H1 (cell line): ENCODE measurements at regions of chr11 and their contacts with region 1.

Region 1: GRCh38 chr11:120756931-120757330 is 245.4 kb downstream of the GRIK4 start:
- DNase-seq: no peak
- H3K4me3 ChIP-seq: no peak overlapping the region
- H3K27ac ChIP-seq: no peak overlapping the region
- H3K4me1 ChIP-seq: peaks cover 0 to 5% (median 3%) of the 10 kb centered on the region in 4 experiments; a peak in 3 of 7 replicates
- H3K27me3 ChIP-seq: peaks cover 0 to under 1% (median 0%) of the 10 kb centered on the region in 4 experiments; a peak in 1 of 7 replicates
- CTCF ChIP-seq: peak; percentile 41 to 70 (median 52)
- EP300 ChIP-seq: no peak
- POLR2A ChIP-seq: no peak
- RAD21 ChIP-seq: peak; percentile 58 to 77

Region 2: GRCh38 chr11:120632579-120632978 is 124.4 kb before region 1 on chr11:
- CTCF ChIA-PET with region 1: no interaction called
- POLR2A ChIA-PET with region 1: no interaction called
- DNase-seq: no peak
- H3K4me3 ChIP-seq: no peak overlapping the region
- H3K27ac ChIP-seq: no peak overlapping the region
- H3K4me1 ChIP-seq: peaks cover 0 to 8% (median 2%) of the 10 kb centered on the region in 4 experiments; a peak in 2 of 7 replicates
- H3K27me3 ChIP-seq: peaks cover 0 to 5% (median 2%) of the 10 kb centered on the region in 4 experiments; a peak in 5 of 7 replicates
- CTCF ChIP-seq: peak; percentile 45 to 88 (median 64)
- EP300 ChIP-seq: no peak
- POLR2A ChIP-seq: no peak
- RAD21 ChIP-seq: peak; percentile 23 to 54; a peak in 2 of 4 replicates

Region 3: GRCh38 chr11:120735035-120735434 is 21.9 kb before region 1 on chr11:
- CTCF ChIA-PET with region 1: no interaction called
- POLR2A ChIA-PET with region 1: no interaction called
- DNase-seq: no peak
- H3K4me3 ChIP-seq: no peak overlapping the region
- H3K27ac ChIP-seq: no peak overlapping the region
- H3K4me1 ChIP-seq: no peaks in the 10 kb centered on the region
- H3K27me3 ChIP-seq: no peaks in the 10 kb centered on the region
- CTCF ChIP-seq: no peak
- EP300 ChIP-seq: no peak
- POLR2A ChIP-seq: no peak
- RAD21 ChIP-seq: no peak

Region 4: DNA sequence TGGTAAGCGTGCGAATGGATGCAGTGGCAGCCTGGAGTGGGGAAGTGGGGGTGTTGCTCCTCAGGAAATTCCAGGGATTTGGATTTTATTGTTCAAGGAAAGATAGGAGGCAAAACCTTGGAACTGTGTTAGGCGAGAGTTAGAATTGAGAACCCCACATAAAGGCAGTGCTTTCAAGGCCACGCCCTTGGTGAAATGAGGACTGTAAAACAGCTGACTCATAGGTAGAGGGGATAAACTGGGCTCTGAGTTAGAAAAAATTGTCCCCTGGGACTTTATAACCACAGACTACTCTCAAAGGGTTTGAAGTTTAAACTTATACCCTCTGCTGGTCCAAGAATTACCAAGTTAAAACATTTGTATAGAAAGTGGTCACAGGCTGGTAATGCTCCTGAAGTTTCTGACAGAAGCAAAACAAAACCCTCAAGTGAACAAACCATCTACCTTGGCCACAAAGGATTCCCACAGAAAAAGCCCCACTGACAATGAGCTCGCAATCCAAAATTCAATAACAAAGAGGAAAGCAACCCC is 16.6 kb after region 1 on chr11:
- CTCF ChIA-PET with region 1: interaction called, 21 read pairs
- POLR2A ChIA-PET with region 1: interaction called, 4 read pairs
- DNase-seq: no peak
- H3K4me3 ChIP-seq: no peak overlapping the region
- H3K27ac ChIP-seq: no peak overlapping the region
- H3K4me1 ChIP-seq: peaks cover 5 to 21% (median 12%) of the 10 kb centered on the region in 4 experiments
- H3K27me3 ChIP-seq: no peaks in the 10 kb centered on the region
- CTCF ChIP-seq: no peak
- EP300 ChIP-seq: no peak
- POLR2A ChIP-seq: no peak
- RAD21 ChIP-seq: no peak